Right ventricle myocardium inferior (tissue), 1 donor: ENCODE measurements at regions of chr11 and their contacts with region 1.

Region 1: DNA sequence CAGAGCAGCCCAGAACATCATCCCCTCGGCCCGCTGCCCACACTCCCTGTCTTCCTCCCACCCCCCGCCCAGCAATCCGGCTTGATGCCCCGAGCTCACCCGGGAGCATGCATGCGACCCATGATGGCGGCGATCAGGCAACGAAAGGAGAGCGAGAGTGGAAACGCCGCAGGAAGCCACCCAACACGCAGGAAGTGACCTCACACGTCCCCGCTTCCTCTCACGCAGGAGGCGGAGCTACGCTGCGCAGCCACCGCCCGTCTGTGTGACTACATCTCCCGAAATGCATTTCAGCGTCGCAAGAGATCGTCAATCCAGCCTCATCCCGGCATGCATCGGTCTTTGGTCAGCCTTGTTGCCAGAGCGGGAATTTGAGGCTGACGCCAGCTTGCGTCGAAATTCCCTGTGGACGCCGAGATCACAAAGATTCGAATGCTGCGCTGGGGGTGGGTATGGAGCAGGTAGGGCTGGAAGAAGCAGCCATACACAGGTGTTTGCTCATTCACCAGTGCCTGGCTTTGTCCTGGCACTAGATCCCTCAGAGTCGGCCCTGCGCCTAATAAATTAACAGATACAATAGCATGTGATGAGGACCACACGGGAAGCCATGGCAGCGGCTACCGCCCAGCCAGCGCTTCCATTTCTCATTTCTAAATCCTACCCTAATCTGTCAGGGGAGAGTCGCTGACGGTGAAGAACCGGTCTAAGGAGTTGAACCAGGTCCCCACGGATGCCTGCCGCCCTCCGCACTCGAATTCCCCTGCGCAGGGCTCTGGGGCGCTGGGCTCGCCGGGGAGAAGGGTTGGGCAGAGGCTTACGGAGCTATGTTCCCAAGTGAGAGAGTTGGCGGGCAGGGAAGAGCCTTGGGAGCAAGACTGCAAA is at the start of gene RPS13:
- DNase-seq: peak; percentile 98
- ATAC-seq: peak; percentile 99
- total RNA-seq, gene RPS13: 811 TPM

Region 2: GRCh38 chr11:17276236-17277023 is 198.7 kb after region 1 on chr11 and contains the start of gene NUCB2:
- intact Hi-C with region 1: loop called (anchors 5 kb)
- DNase-seq: peak; percentile 99
- ATAC-seq: peak; percentile 100
- total RNA-seq, gene NUCB2: 111 TPM